ENCODE measurements at regions of chr13 and their contacts with region 1.

Region 1: DNA sequence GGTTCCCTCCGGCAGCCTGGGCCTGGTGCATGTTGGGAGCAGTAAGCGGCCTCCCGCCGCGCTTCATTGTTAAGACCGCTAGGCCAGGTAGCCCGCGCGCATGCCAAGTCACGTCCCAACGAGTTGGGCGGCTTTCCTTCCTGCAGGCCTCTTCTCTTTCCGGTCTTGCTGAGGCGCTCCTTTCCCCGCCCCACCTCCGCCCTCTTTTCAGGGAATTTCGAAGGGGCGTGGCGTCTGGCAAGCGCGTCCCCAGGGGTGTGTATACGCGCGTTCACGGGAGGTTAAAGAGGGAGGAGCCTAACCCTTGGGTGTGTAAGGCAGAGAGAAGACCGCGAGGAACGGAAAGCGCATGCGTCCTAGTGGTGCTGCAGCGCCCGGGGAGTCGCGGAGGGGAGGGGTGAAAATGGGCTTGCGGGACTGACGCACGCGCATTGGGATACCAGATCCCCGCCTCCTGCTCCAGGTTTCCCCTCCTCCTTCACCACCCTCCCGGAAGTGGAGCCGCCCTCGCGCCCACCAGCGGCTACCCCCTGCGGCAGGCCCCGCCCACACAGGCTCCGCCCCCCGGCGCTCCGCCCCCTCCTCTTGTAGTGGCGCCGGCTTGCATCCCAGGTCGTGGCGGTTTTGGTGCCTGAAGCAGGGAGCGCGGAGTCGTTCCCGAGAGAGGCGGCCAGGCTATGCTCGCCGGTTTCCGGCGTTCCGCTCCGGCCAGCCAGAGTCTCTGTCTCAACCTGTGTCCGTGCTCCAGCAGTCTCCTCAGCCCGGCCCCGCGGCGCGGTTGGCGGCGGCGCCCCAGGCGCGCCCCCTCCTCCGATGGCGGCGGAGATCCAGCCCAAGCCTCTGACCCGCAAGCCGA is at the start of gene WDFY2:
- DNase-seq: peak; percentile 99
- ATAC-seq: peak; percentile 92
- H3K4me3 ChIP-seq: peak within 1 kb of the TSS; percentile 82 to 98 (median 90)
- H3K27ac ChIP-seq: peak within 1 kb of the TSS; percentile 94
- H3K4me1 ChIP-seq: peaks cover 65% of the 10 kb centered on the region
- H3K27me3 ChIP-seq: no peaks in the 10 kb centered on the region; a peak in 1 of 5 replicates
- CTCF ChIP-seq: peak; percentile 64
- EP300 ChIP-seq: 0 out of 4 replicates have a peak, but pooled peaks of 1 of the 2 experiments have one; percentile 9
- POLR2A ChIP-seq: peak; percentile 65 to 89; a peak in 3 of 4 replicates
- RAD21 ChIP-seq: peak; percentile 46; the same call in 1 of the 2 replicates
- total RNA-seq, gene WDFY2: 16.4 and 22.6 TPM in 2 replicates

Region 2: GRCh38 chr13:50745561-50746115 is 838.5 kb before region 1 on chr13:
- CTCF ChIA-PET with region 1: no interaction called
- POLR2A ChIA-PET with region 1: no interaction called
- in situ Hi-C with region 1: no loop called
- intact Hi-C with region 1: no loop called
- DNase-seq: no peak
- ATAC-seq: no peak
- H3K4me3 ChIP-seq: no peak overlapping the region
- H3K27ac ChIP-seq: no peak overlapping the region
- H3K4me1 ChIP-seq: peaks cover 7% of the 10 kb centered on the region; the same call in 1 of the 2 replicates
- H3K27me3 ChIP-seq: no peaks in the 10 kb centered on the region
- CTCF ChIP-seq: no peak
- EP300 ChIP-seq: no peak
- POLR2A ChIP-seq: no peak
- RAD21 ChIP-seq: no peak

Region 3: GRCh38 chr13:51523082-51523518 is 61.0 kb before region 1 on chr13:
- CTCF ChIA-PET with region 1: no interaction called
- POLR2A ChIA-PET with region 1: interaction called, 3 read pairs
- in situ Hi-C with region 1: no loop called
- intact Hi-C with region 1: loop called (anchors 1 kb)
- DNase-seq: peak; percentile 53
- ATAC-seq: peak; percentile 19
- H3K4me3 ChIP-seq: no peak overlapping the region
- H3K27ac ChIP-seq: peak overlapping the region; percentile 73
- H3K4me1 ChIP-seq: peaks cover 84% of the 10 kb centered on the region
- H3K27me3 ChIP-seq: no peaks in the 10 kb centered on the region
- CTCF ChIP-seq: no peak
- EP300 ChIP-seq: no peak
- POLR2A ChIP-seq: no peak
- RAD21 ChIP-seq: no peak

Region 4: DNA sequence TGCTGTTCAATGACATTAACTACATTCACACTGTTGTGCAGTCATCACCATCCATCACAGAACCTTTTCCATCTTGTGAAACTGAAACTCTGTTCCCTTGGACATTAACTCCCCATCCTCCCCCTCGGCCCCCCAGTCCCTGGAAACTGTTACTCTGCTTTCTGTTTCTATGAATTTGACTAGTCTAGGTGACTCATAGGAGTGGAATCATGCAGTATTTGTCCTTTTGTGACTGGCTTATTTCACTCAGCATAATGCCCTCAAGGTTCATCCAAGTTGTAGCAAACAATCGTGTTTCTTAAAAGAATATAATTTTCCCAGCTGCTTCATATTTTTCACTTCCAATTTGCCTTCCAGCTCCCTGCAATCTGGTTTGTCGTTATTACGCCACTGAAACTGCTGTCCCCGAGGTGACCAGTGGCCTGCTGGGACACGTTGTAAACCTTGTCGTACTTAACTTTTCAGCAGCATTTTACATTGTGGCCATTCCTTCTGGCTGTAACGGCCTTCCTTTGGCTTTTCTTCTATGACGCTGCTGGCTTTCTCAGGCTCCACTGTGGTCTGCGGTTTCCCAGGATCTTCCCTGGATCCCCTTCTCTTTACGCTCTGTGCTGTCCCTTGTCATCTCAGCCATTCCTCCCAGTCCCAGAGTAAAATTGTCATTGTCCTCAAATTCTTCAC is 145.9 kb after region 1 on chr13:
- CTCF ChIA-PET with region 1: no interaction called
- POLR2A ChIA-PET with region 1: no interaction called
- in situ Hi-C with region 1: no loop called
- intact Hi-C with region 1: loop called (anchors 10 kb)
- DNase-seq: peak; percentile 70
- ATAC-seq: peak; percentile 70
- H3K4me3 ChIP-seq: no peak overlapping the region
- H3K27ac ChIP-seq: peak overlapping the region; percentile 35
- H3K4me1 ChIP-seq: peaks cover 37% of the 10 kb centered on the region
- H3K27me3 ChIP-seq: no peaks in the 10 kb centered on the region
- CTCF ChIP-seq: no peak
- EP300 ChIP-seq: no peak
- POLR2A ChIP-seq: no peak
- RAD21 ChIP-seq: no peak

Region 5: GRCh38 chr13:51781246-51782022 is 197.3 kb after region 1 on chr13:
- CTCF ChIA-PET with region 1: no interaction called
- POLR2A ChIA-PET with region 1: no interaction called
- in situ Hi-C with region 1: no loop called
- intact Hi-C with region 1: loop called (anchors 1 kb)
- DNase-seq: no peak
- ATAC-seq: peak; percentile 77
- H3K4me3 ChIP-seq: no peak overlapping the region
- H3K27ac ChIP-seq: no peak overlapping the region
- H3K4me1 ChIP-seq: peaks cover 19% of the 10 kb centered on the region
- H3K27me3 ChIP-seq: no peaks in the 10 kb centered on the region
- CTCF ChIP-seq: peak; percentile 68
- EP300 ChIP-seq: no peak
- POLR2A ChIP-seq: no peak
- RAD21 ChIP-seq: peak; percentile 50

Measured in HepG2 (cell line).